ENCODE measurements at regions of chr7 and their contacts with region 1.

Region 1: DNA sequence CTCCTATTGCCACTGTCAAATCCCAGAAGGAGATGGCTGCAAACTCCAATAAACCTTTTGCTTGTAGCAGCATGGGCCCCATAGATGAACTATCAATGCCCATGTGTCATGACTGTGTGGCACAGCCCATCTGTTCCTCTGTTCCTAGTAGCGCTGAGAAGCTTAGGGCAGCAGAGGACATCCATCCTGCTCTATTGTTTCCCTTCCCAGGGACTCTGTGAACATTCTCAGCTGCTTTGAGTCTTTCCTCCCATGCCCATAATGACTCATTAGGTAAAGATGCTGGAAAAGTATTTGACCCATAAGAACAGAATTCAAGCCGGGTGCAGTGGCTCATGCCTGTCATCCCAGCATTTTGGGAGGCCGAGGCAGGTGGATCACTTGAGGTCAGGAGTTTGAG is 28.3 kb downstream of the STMP1 start:
- DNase-seq: no peak
- ATAC-seq: no peak
- H3K4me3 ChIP-seq: no peak overlapping the region
- H3K27ac ChIP-seq: no peak overlapping the region
- H3K4me1 ChIP-seq: peaks cover 0 to 13% (median 5%) of the 10 kb centered on the region in 12 donors
- H3K27me3 ChIP-seq: no peaks in the 10 kb centered on the region
- CTCF ChIP-seq: no peak
- POLR2A ChIP-seq: no peak

Region 2: DNA sequence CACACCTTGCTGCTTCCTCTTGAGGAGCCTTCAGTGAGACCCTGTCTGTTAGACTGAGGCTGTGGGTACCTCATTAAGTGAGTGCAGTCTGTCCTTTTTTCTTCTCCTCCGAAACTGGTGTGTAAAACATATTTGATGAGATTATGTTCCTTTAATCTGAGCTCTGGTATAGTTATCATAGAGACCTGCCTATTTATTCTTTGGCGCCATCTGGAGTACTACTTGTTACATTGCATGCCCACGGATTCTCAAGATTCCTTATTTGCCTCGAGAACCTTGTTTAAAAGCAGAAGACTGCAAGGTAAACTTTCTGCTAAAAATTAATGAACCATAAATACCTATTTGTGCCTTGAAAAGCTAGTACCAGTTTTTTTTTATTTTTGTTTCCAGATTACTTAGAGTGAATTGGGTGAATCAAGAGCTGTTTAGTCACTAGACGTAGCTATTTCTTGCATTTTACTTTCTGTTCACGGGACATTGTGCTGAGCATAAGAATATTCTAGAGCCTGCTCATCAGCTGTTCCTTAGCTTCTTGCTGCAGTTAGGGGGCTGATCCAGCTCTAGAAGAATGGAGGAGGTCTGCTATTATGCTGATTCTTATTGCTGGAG is 45.2 kb before region 1 on chr7:
- intact Hi-C with region 1: no loop called
- DNase-seq: no peak
- ATAC-seq: peak in 3 of 4 donors; percentile 51 to 70 (median 62)
- H3K4me3 ChIP-seq: no peak overlapping the region
- H3K27ac ChIP-seq: no peak overlapping the region
- H3K4me1 ChIP-seq: peaks cover 0 to 2% (median 0%) of the 10 kb centered on the region in 12 donors
- H3K27me3 ChIP-seq: no peaks in the 10 kb centered on the region
- CTCF ChIP-seq: peak; percentile 56 to 79 (median 70)
- POLR2A ChIP-seq: no peak

Region 3: GRCh38 chr7:135728136-135728669 is 37.6 kb after region 1 on chr7 and contains the start of gene SLC13A4:
- intact Hi-C with region 1: no loop called
- DNase-seq: no peak
- ATAC-seq: no peak
- H3K4me3 ChIP-seq: no peak within 1 kb of the TSS
- H3K27ac ChIP-seq: no peak within 1 kb of the TSS
- H3K4me1 ChIP-seq: peaks cover 0 to 20% (median 2%) of the 10 kb centered on the region in 12 donors
- H3K27me3 ChIP-seq: no peaks in the 10 kb centered on the region
- CTCF ChIP-seq: no peak
- POLR2A ChIP-seq: no peak
- total RNA-seq, gene SLC13A4: 0.09 to 1.5 (median 0.46) TPM in 8 of 9 donors, not detected in the other

Region 4: DNA sequence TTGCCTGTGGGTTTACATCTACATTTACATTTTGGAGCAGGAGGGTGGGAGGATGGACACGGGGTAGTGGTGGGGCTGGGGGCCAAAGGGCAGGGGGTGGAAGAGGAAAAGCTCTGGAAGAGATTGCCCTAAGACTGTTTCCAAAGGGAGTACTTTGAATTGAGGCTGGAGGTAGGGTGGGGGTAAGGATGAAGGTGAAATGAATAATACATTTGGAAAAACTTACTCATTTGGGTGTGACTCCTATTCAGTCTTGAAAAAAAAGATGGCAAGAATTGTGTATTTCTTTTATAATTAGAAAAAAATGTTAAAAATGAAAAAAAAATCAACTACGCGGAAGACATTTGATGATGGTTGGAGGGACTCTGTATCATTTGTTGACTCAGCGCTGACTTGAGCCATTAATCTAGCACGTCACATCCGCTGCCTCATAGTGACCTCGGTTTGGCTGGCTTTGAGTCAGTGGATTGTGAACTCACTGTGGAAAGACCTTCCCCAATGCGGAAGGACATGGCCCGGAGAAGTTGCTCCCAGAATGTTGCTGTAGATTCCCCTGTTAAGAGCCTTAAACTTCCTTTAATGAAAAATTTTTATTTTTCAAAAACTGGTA is 55.2 kb after region 1 on chr7:
- intact Hi-C with region 1: loop called in 1 of 10 experiments (anchors 5 kb)
- DNase-seq: peak in 4 of 5 donors; percentile 57 to 75 (median 65)
- ATAC-seq: peak in 3 of 4 donors; percentile 57 to 67 (median 59)
- H3K4me3 ChIP-seq: peak overlapping the region in 4 of 12 donors; percentile 0 to 60 (median 48)
- H3K27ac ChIP-seq: peak overlapping the region in 10 of 12 donors; percentile 17 to 89 (median 69)
- H3K4me1 ChIP-seq: peaks cover 3 to 53% (median 20%) of the 10 kb centered on the region in 12 donors
- H3K27me3 ChIP-seq: no peaks in the 10 kb centered on the region
- CTCF ChIP-seq: no peak
- POLR2A ChIP-seq: no peak

Region 5: DNA sequence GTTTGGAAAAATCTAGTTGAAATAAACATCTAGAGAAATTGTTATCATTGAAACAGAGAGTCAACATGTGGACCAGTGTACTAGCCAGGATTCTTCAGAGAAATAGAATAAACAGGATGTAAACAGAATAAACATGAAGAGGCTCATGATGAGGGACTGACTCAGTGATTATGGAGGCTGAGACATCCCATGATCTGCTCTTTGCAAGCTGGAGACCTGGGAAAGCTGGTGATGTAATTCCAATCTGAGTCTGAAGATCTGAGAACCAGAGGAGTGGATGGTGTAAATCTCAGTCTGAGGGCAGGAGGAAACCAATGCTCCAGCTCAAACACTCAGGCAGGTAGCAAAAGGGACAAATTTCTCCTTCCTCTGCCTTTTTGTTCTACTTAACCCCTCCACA is 120.9 kb after region 1 on chr7:
- intact Hi-C with region 1: no loop called
- DNase-seq: no peak
- ATAC-seq: no peak
- H3K4me3 ChIP-seq: no peak overlapping the region
- H3K27ac ChIP-seq: no peak overlapping the region
- H3K4me1 ChIP-seq: peaks cover 0 to 15% (median 9%) of the 10 kb centered on the region in 12 donors
- H3K27me3 ChIP-seq: no peaks in the 10 kb centered on the region
- CTCF ChIP-seq: no peak
- POLR2A ChIP-seq: no peak

Region 6: GRCh38 chr7:135843214-135843613 is 152.6 kb after region 1 on chr7:
- intact Hi-C with region 1: no loop called
- DNase-seq: no peak
- ATAC-seq: no peak
- H3K4me3 ChIP-seq: no peak overlapping the region
- H3K27ac ChIP-seq: no peak overlapping the region
- H3K4me1 ChIP-seq: peaks cover 0 to under 1% (median 0%) of the 10 kb centered on the region in 12 donors
- H3K27me3 ChIP-seq: no peaks in the 10 kb centered on the region
- CTCF ChIP-seq: no peak
- POLR2A ChIP-seq: no peak